WTC11 (cell line): ENCODE measurements at regions of chr5 and their contacts with region 1.

Region 1: GRCh38 chr5:81105261-81105877 is 127.8 kb upstream of the CKMT2 start:
- DNase-seq: no peak
- ATAC-seq: no peak
- H3K4me3 Mint-ChIP-seq: no peak overlapping the region
- H3K27ac Mint-ChIP-seq: no peak overlapping the region
- H3K4me1 Mint-ChIP-seq: no peaks in the 10 kb centered on the region
- H3K27me3 Mint-ChIP-seq: no peaks in the 10 kb centered on the region
- CTCF ChIP-seq: no peak

Region 2: GRCh38 chr5:80686757-80687156 is 418.6 kb before region 1 on chr5:
- CTCF ChIA-PET with region 1: interaction called, 11 read pairs
- POLR2A ChIA-PET with region 1: no interaction called
- DNase-seq: no peak
- ATAC-seq: no peak
- H3K4me3 Mint-ChIP-seq: no peak overlapping the region
- H3K27ac Mint-ChIP-seq: no peak overlapping the region
- H3K4me1 Mint-ChIP-seq: peaks cover 8% of the 10 kb centered on the region
- H3K27me3 Mint-ChIP-seq: no peaks in the 10 kb centered on the region
- CTCF ChIP-seq: no peak

Region 3: GRCh38 chr5:80711938-80712337 is 393.4 kb before region 1 on chr5:
- CTCF ChIA-PET with region 1: interaction called, 13 read pairs
- POLR2A ChIA-PET with region 1: no interaction called
- DNase-seq: peak; percentile 67
- ATAC-seq: peak; percentile 98
- H3K4me3 Mint-ChIP-seq: no peak overlapping the region
- H3K27ac Mint-ChIP-seq: no peak overlapping the region
- H3K4me1 Mint-ChIP-seq: peaks cover 13% of the 10 kb centered on the region
- H3K27me3 Mint-ChIP-seq: no peaks in the 10 kb centered on the region
- CTCF ChIP-seq: no peak

Region 4: GRCh38 chr5:80935811-80936385 is 169.5 kb before region 1 on chr5:
- CTCF ChIA-PET with region 1: interaction called, 25 read pairs
- POLR2A ChIA-PET with region 1: no interaction called
- DNase-seq: no peak
- ATAC-seq: peak; percentile 91
- H3K4me3 Mint-ChIP-seq: no peak overlapping the region
- H3K27ac Mint-ChIP-seq: peak overlapping the region; percentile 67; the same call in 1 of the 2 replicates
- H3K4me1 Mint-ChIP-seq: no peaks in the 10 kb centered on the region; the same call in 1 of the 2 replicates
- H3K27me3 Mint-ChIP-seq: no peaks in the 10 kb centered on the region; the same call in 1 of the 2 replicates
- CTCF ChIP-seq: no peak

Region 5: DNA sequence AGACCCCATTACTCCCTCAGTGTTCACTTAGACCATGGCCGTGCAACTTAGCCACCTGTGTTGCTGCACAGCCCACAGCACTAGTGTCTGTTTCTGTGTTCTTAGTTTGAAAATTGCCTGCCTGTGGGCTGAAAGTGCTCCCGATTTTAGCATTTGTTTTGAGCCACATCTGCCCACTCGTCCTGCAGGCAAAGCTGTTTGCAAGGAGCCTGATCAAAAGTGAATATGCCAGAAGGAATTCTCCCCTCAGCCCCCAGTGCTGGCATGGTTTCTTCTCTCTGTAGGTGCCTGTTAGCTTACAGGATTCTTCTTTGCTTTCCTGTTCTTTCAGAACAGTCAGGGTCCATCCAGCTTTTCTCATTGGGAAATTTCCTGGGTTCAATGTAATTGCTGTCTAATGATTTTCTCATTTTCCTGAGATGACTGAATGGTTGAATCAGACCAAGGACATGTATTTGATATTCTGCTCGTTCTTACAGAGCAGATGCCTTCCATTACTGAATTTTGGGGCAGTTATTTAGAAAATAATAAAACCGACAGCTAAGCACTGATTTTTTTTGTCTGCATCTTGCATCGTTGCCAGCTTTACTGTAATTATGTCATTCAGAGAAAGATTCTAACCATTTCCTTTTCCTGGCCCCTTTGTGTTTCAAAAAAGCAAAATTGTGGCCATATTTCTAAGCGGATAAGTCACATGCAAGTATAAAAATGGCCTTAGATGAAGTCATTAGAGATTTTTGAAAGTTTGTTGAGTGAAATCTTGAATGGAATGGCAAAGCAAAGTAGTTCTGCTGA is 16.7 kb after region 1 on chr5:
- CTCF ChIA-PET with region 1: interaction called, 11 read pairs
- POLR2A ChIA-PET with region 1: no interaction called
- DNase-seq: no peak
- ATAC-seq: no peak
- H3K4me3 Mint-ChIP-seq: no peak overlapping the region
- H3K27ac Mint-ChIP-seq: no peak overlapping the region
- H3K4me1 Mint-ChIP-seq: no peaks in the 10 kb centered on the region
- H3K27me3 Mint-ChIP-seq: no peaks in the 10 kb centered on the region
- CTCF ChIP-seq: no peak

Region 6: DNA sequence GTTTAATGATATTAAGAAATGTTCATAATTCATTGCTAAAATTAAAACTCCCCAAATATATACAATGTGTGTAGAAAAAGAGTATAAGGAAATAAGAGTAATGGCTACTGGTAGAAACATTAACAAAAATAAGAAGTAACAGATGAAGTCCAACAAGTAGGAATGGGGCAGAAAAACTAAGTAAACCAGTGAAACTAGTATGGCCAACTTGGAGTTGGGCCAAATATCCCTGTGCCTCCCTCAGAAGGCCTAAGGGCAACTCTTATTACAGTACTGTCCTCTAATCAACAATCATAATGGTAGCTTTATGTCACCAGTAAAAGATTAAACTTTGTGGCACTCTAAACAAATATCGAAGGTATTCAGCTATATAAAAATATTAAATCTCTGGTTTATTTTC is 552.0 kb after region 1 on chr5:
- CTCF ChIA-PET with region 1: no interaction called
- POLR2A ChIA-PET with region 1: no interaction called
- DNase-seq: no peak
- ATAC-seq: no peak
- H3K4me3 Mint-ChIP-seq: no peak overlapping the region
- H3K27ac Mint-ChIP-seq: no peak overlapping the region
- H3K4me1 Mint-ChIP-seq: no peaks in the 10 kb centered on the region
- H3K27me3 Mint-ChIP-seq: no peaks in the 10 kb centered on the region
- CTCF ChIP-seq: no peak